Mammary epithelial cell (primary cell): ENCODE measurements at regions of chr5 and their contacts with region 1.

Region 1: GRCh38 chr5:106587-106986 is 14.6 kb downstream of the PLEKHG4B start:
- DNase-seq: no peak
- H3K4me3 ChIP-seq: no peak overlapping the region
- H3K27ac ChIP-seq: no peak overlapping the region
- H3K4me1 ChIP-seq: no peaks in the 10 kb centered on the region
- H3K27me3 ChIP-seq: peaks cover 2% of the 10 kb centered on the region
- CTCF ChIP-seq: no peak

Region 2: GRCh38 chr5:195401-196160 is 89.0 kb after region 1 on chr5:
- CTCF ChIA-PET with region 1: no interaction called
- dilution Hi-C with region 1: loop called (anchors 5 kb)
- in situ Hi-C with region 1: no loop called
- intact Hi-C with region 1: no loop called
- DNase-seq: no peak
- H3K4me3 ChIP-seq: no peak overlapping the region
- H3K27ac ChIP-seq: no peak overlapping the region
- H3K4me1 ChIP-seq: no peaks in the 10 kb centered on the region
- H3K27me3 ChIP-seq: peaks cover 4% of the 10 kb centered on the region
- CTCF ChIP-seq: no peak

Region 3: DNA sequence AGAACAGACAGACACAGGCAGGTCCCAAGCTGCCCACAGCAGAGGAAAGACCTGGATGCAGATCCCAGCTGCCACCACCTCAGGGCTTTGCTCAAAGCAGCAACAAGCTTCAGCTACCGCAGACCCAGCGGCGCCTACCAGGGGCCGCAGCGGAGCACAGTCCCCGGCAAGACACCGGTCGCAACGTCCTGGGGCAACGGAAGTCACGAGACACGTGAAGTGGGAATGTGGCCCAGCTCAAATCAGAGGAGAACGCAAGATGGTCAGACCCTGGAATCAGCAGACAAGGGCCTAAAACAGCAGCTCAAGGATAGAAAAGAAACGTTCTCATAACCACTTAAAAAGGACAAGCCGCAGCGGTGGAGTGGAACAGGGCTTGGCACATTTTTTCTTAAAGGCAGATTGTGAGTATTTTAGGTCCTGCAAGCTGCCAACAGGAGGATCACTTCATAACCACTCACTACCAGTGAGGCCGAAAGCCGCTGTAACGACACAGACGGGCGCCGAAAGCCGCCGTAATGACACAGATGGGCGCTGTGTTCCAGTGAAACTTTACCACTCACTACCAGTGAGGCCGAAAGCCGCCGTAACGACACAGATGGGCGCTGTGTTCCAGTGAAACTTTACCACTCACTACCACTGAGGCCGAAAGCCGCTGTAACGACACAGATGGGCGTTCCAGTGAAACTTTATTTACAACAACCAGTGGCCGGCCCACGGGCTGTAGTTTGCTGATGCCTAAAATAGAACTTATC is 395.9 kb after region 1 on chr5:
- CTCF ChIA-PET with region 1: no interaction called
- dilution Hi-C with region 1: no loop called
- in situ Hi-C with region 1: no loop called
- intact Hi-C with region 1: no loop called
- DNase-seq: no peak
- H3K4me3 ChIP-seq: no peak overlapping the region
- H3K27ac ChIP-seq: no peak overlapping the region
- H3K4me1 ChIP-seq: no peaks in the 10 kb centered on the region
- H3K27me3 ChIP-seq: peaks cover 7% of the 10 kb centered on the region
- CTCF ChIP-seq: no peak